Activated T-helper 1 cell treated with anti-CD3 and anti-CD28 coated beads, Interleukin-12 subunit alpha, Interleukin-12 subunit beta, Interleukin-2, Interleukin-4 antibody, amounts not matched to agents 30 ng/mL and 10 ng/mL and 1 ng/mL, durations not matched to agents 14 hours and 24 hours and 36 hours (primary cell): ENCODE measurements at regions of chr9 and their contacts with region 1.

Region 1: GRCh38 chr9:19999491-20000057 is 210.7 kb upstream of the SLC24A2 start:
- DNase-seq: peak; percentile 62
- H3K4me3 Mint-ChIP-seq: peak overlapping the region; percentile 63
- H3K27ac Mint-ChIP-seq: peak overlapping the region; percentile 99
- H3K4me1 Mint-ChIP-seq: peaks cover 66% of the 10 kb centered on the region
- H3K27me3 Mint-ChIP-seq: no peaks in the 10 kb centered on the region

Region 2: DNA sequence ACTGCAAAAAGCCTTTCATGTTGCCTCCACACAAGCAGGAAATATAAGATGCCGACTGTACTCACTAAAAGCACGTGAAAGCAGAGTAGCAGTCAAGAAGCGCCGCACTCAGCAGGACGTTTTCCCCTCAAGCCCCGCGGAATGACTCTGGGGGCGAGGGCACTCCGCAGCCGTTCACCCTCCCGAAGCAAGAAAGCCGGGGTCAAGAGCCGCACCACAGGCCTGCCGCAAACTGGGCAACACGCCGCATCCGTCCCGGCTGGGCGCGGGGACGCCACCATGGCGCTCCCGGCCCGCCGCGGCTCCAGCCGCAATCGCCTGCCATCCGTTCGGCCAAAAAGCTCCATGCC is 619.9 kb before region 1 on chr9:
- intact Hi-C with region 1: loop called (anchors 10 kb)
- DNase-seq: no peak
- H3K4me3 Mint-ChIP-seq: peak overlapping the region; percentile 98
- H3K27ac Mint-ChIP-seq: peak overlapping the region; percentile 98
- H3K4me1 Mint-ChIP-seq: peaks cover 61% of the 10 kb centered on the region
- H3K27me3 Mint-ChIP-seq: no peaks in the 10 kb centered on the region

Region 3: GRCh38 chr9:19471737-19472648 is 527.6 kb before region 1 on chr9:
- intact Hi-C with region 1: no loop called
- DNase-seq: no peak
- H3K4me3 Mint-ChIP-seq: no peak overlapping the region
- H3K27ac Mint-ChIP-seq: peak overlapping the region; percentile 4
- H3K4me1 Mint-ChIP-seq: peaks cover 19% of the 10 kb centered on the region
- H3K27me3 Mint-ChIP-seq: peaks cover 15% of the 10 kb centered on the region

Region 4: GRCh38 chr9:19699756-19700155 is 299.8 kb before region 1 on chr9:
- intact Hi-C with region 1: no loop called
- DNase-seq: no peak
- H3K4me3 Mint-ChIP-seq: no peak overlapping the region
- H3K27ac Mint-ChIP-seq: no peak overlapping the region
- H3K4me1 Mint-ChIP-seq: no peaks in the 10 kb centered on the region
- H3K27me3 Mint-ChIP-seq: peaks cover 2% of the 10 kb centered on the region

Region 5: DNA sequence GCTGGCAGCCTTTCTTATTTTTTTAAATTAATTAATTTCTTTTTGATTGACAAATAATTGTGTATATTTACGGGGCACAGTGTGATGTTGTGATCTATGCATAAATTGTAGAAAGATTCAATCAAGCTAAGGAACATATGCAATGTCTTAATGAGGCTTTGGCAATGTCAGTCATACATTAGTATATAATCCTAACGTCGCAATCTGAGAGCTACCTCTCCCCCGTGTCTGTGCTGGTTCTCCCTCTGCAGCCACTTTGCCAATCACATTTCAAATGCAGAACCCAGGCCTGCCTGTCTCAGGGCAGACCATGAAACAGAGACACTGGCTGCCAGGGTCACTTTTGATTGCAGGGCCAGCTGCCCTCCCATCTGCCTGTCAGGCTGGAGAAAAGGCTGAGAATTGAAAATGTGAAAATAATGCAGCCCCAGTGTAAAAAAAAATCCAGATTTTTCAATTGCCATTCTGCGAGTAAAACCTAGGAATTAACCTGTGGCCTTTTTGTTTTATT is 267.1 kb before region 1 on chr9:
- intact Hi-C with region 1: no loop called
- DNase-seq: no peak
- H3K4me3 Mint-ChIP-seq: no peak overlapping the region
- H3K27ac Mint-ChIP-seq: no peak overlapping the region
- H3K4me1 Mint-ChIP-seq: no peaks in the 10 kb centered on the region
- H3K27me3 Mint-ChIP-seq: no peaks in the 10 kb centered on the region

Region 6: DNA sequence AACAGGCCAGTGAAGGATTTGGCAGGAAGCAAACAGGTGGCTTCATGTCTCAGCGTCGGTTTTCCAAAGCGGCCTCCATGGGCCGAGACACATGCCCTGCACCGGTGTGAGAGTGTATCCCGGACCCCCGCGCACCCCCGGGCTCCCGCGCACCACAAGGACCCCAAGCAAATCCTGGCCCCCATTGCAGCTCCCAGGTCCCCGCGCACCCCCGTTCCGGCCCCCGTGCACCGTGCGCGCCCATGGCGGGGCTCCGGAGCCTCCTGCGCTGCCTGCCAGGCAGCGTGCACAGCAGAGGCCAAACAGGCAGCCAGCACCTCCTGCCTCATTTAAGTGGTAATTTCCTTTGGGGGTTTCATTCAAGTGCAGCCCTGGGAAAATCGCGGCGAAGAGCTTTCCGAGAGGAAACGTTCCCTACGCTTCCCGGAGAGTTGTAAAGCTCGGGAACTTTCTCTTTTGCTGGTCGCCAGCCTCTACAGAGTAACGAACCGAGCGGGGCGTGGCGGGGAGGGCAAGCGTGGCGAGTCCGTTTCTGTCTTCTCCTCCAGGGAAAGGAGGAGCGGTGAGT is 65.2 kb before region 1 on chr9:
- intact Hi-C with region 1: loop called (anchors 5 kb)
- DNase-seq: no peak
- H3K4me3 Mint-ChIP-seq: peak overlapping the region; percentile 62
- H3K27ac Mint-ChIP-seq: no peak overlapping the region
- H3K4me1 Mint-ChIP-seq: peaks cover 14% of the 10 kb centered on the region
- H3K27me3 Mint-ChIP-seq: peaks cover 4% of the 10 kb centered on the region

Region 7: DNA sequence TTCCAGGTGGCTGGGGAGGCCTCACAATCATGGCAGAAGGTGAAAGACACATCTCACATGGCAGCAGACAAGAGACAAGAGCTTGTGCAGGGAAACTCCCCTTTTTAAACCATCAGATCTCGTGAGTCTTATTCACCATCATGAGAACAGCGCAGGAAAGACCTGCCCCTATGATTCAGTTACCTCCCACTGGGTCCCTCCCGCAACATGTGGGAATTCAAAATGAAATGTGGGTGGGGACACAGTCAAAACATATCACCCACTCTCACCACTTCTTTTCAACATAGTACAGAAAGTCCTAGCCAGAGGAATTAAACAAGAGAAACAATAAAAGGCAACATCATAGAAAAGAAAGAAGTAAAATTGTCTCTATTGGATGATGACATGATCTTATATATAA is 12.7 kb after region 1 on chr9:
- intact Hi-C with region 1: loop called (anchors 2 kb)
- DNase-seq: no peak
- H3K4me3 Mint-ChIP-seq: no peak overlapping the region
- H3K27ac Mint-ChIP-seq: peak overlapping the region; percentile 13
- H3K4me1 Mint-ChIP-seq: peaks cover 50% of the 10 kb centered on the region
- H3K27me3 Mint-ChIP-seq: no peaks in the 10 kb centered on the region

Region 8: DNA sequence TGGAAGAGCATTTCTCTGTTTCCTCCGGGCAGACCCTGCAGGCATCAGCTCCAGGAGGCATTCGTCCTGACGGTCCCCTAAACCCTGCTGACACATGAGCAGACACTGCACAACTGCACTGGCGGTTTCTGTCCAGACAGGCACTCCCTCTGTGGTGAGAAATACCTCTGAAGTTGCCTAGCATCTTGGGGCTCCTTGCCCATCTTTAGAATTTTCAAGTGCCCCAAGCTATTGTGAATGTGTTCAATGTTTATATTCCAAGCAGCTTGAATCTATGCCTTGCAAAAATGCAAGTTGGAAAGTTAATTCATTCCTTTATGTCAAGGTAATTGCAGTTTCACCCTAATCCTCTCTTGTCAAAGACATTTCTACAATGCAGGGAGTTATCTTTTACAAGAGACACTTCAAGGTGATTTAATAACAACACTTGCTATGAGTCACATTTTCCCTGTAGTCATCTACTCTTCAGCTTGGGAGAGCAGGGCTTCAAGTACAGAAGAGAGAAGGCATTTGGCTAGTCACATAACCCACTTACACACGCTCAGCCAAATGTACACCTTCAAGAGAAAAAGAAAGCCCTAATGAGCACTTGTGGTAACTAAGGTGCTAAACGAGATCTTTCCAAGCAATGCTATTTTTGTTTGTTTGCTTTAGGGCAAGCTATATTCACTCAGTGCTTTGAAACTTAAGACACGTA is 320.2 kb after region 1 on chr9:
- intact Hi-C with region 1: loop called (anchors 1 kb)
- DNase-seq: peak; percentile 37
- H3K4me3 Mint-ChIP-seq: peak overlapping the region; percentile 35
- H3K27ac Mint-ChIP-seq: peak overlapping the region; percentile 91
- H3K4me1 Mint-ChIP-seq: peaks cover 91% of the 10 kb centered on the region
- H3K27me3 Mint-ChIP-seq: no peaks in the 10 kb centered on the region

Region 9: GRCh38 chr9:20604562-20604961 is 605.0 kb after region 1 on chr9:
- intact Hi-C with region 1: loop called (anchors 5 kb)
- DNase-seq: no peak
- H3K4me3 Mint-ChIP-seq: peak overlapping the region; percentile 67
- H3K27ac Mint-ChIP-seq: peak overlapping the region; percentile 49
- H3K4me1 Mint-ChIP-seq: peaks cover 71% of the 10 kb centered on the region
- H3K27me3 Mint-ChIP-seq: no peaks in the 10 kb centered on the region

Region 10: DNA sequence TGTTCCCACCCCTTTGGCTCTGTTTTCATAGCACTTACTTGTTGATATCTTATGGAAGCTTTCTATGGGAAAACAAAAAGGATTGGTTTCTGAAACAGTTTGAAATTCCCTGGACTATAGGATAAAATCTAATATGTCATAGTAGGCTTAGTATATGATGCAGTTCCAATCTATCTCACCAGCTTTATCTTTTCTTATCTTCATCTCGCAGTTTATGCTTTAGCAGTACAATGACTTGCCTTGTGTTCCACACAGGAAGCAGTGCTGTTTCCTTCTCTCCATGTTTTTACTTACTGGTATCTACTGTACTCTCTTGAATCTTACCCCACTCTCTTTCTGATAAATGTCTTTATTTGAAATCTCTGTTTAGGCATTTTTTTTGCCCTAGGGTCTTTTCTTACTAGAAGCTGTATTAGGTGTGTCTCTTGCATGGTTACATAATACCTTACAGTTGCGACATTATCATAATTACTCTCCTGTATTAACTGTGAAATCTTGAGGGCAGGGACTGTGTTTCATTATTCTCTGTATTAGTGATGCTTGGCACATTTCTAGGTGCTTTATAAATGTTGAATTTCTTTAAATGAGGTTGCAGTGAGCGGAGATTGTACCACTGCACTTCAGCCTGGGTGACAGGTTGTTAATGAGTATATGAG is 760.8 kb after region 1 on chr9:
- intact Hi-C with region 1: no loop called
- DNase-seq: no peak
- H3K4me3 Mint-ChIP-seq: no peak overlapping the region
- H3K27ac Mint-ChIP-seq: no peak overlapping the region
- H3K4me1 Mint-ChIP-seq: no peaks in the 10 kb centered on the region
- H3K27me3 Mint-ChIP-seq: no peaks in the 10 kb centered on the region

Region 11: GRCh38 chr9:21576331-21577189 is 1577.0 kb after region 1 on chr9:
- intact Hi-C with region 1: loop called (anchors 10 kb)
- DNase-seq: no peak
- H3K4me3 Mint-ChIP-seq: peak overlapping the region; percentile 4
- H3K27ac Mint-ChIP-seq: no peak overlapping the region
- H3K4me1 Mint-ChIP-seq: peaks cover 36% of the 10 kb centered on the region
- H3K27me3 Mint-ChIP-seq: peaks cover 33% of the 10 kb centered on the region